Mammary epithelial cell (primary cell): ENCODE measurements at regions of chr2 and their contacts with region 1.

Region 1: GRCh38 chr2:70708376-70709199 is 59.4 kb downstream of the ADD2 start:
- DNase-seq: no peak
- H3K4me3 ChIP-seq: no peak overlapping the region
- H3K27ac ChIP-seq: no peak overlapping the region
- H3K4me1 ChIP-seq: no peaks in the 10 kb centered on the region
- H3K27me3 ChIP-seq: no peaks in the 10 kb centered on the region
- CTCF ChIP-seq: no peak

Region 2: GRCh38 chr2:70767699-70768589 is 59.4 kb after region 1 on chr2 and contains the start of gene ADD2:
- CTCF ChIA-PET with region 1: no interaction called
- dilution Hi-C with region 1: loop called (anchors 5 kb)
- in situ Hi-C with region 1: no loop called
- intact Hi-C with region 1: no loop called
- DNase-seq: peak; percentile 10
- H3K4me3 ChIP-seq: peak within 1 kb of the TSS; percentile 18 to 30 (median 27)
- H3K27ac ChIP-seq: no peak within 1 kb of the TSS
- H3K4me1 ChIP-seq: peaks cover 7% of the 10 kb centered on the region
- H3K27me3 ChIP-seq: peaks cover 31% of the 10 kb centered on the region
- CTCF ChIP-seq: no peak
- total RNA-seq, gene ADD2: not detected